ENCODE measurements at regions of chr5 and their contacts with region 1.

Region 1: GRCh38 chr5:38420691-38421390 is 135.6 kb downstream of the LIFR start:
- DNase-seq: peak; percentile 51
- ATAC-seq: no peak
- H3K4me3 Mint-ChIP-seq: no peak overlapping the region
- H3K27ac Mint-ChIP-seq: no peak overlapping the region
- H3K4me1 Mint-ChIP-seq: no peaks in the 10 kb centered on the region
- H3K27me3 Mint-ChIP-seq: peaks cover 43% of the 10 kb centered on the region

Region 2: GRCh38 chr5:38382898-38383297 is 37.9 kb before region 1 on chr5:
- CTCF ChIA-PET with region 1: interaction called, 11 read pairs
- DNase-seq: peak; percentile 61
- ATAC-seq: peak; percentile 78
- H3K4me3 Mint-ChIP-seq: no peak overlapping the region
- H3K27ac Mint-ChIP-seq: no peak overlapping the region
- H3K4me1 Mint-ChIP-seq: no peaks in the 10 kb centered on the region
- H3K27me3 Mint-ChIP-seq: peaks cover 29% of the 10 kb centered on the region

Region 3: DNA sequence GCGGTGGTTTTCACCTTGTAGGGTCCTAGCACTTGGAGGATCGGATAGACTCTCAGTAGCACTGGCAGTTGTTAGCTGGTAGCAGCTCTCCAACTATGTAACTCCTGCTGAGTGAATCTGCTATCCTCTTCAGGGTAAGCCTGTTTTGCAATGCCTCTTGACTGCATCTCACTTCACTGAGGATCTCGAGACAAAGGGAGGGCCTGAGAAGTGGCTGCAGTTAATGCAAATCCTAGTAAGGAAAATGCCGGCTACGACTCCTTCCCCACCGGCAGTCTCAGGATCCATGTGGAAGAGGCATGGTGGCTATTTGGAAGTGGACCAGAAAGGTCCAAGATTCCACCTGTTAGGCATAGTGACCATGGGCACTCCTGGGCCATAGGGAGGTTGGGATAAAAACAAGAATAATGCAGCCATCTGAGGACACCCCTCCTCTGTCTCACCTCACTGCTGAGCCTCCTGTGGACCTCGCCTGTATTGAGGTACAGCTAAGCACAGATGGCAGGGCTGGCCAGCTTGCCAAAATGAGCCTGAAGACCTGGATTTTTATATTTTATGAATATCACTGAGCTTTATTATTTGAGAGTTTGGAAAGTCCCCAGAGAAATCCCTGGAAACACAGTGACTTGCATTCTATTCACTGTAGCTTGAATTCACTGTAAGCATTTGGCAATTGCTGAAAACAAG is 10.4 kb before region 1 on chr5:
- CTCF ChIA-PET with region 1: interaction called, 10 read pairs
- DNase-seq: no peak
- ATAC-seq: no peak
- H3K4me3 Mint-ChIP-seq: no peak overlapping the region
- H3K27ac Mint-ChIP-seq: no peak overlapping the region
- H3K4me1 Mint-ChIP-seq: no peaks in the 10 kb centered on the region
- H3K27me3 Mint-ChIP-seq: peaks cover 13% of the 10 kb centered on the region

Region 4: GRCh38 chr5:38809388-38810359 is 388.8 kb after region 1 on chr5:
- CTCF ChIA-PET with region 1: interaction called, 35 read pairs
- DNase-seq: peak; percentile 66
- ATAC-seq: peak; percentile 63
- H3K4me3 Mint-ChIP-seq: no peak overlapping the region
- H3K27ac Mint-ChIP-seq: no peak overlapping the region
- H3K4me1 Mint-ChIP-seq: peaks cover 3% of the 10 kb centered on the region
- H3K27me3 Mint-ChIP-seq: peaks cover 32% of the 10 kb centered on the region

Region 5: DNA sequence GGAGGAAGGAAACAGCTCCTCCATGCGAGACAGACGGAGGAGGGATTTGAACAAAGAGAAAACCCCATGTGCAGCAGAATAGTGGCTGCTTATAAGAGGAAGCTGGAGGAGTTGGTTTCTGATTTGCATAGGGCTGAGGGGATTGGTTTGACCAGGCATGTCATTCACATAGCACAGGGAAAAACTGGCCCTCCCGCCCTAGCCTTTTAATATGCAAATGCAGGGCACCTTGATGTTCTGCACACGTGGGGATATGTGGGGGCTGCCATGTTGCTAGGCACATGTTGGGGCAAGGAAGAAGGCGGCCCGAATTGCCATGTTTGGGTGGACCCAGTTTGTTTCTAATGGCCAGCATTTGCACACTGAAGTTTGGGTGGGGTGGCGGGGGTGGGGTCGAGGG is 467.2 kb after region 1 on chr5:
- CTCF ChIA-PET with region 1: no interaction called
- DNase-seq: no peak
- ATAC-seq: no peak
- H3K4me3 Mint-ChIP-seq: no peak overlapping the region
- H3K27ac Mint-ChIP-seq: no peak overlapping the region
- H3K4me1 Mint-ChIP-seq: no peaks in the 10 kb centered on the region
- H3K27me3 Mint-ChIP-seq: peaks cover 31% of the 10 kb centered on the region